PC-3 (cell line): ENCODE measurements at regions of chr12 and their contacts with region 1.

Region 1: GRCh38 chr12:27573972-27574371 is 50.0 kb downstream of the PPFIBP1 start:
- DNase-seq: peak; percentile 99
- ATAC-seq: peak; percentile 88
- H3K4me3 ChIP-seq: peak overlapping the region; percentile 29; the same call in 1 of the 2 replicates
- H3K27ac ChIP-seq: peak overlapping the region; percentile 96
- H3K4me1 ChIP-seq: peaks cover 66% of the 10 kb centered on the region
- H3K27me3 ChIP-seq: no peaks in the 10 kb centered on the region
- CTCF ChIP-seq: no peak

Region 2: DNA sequence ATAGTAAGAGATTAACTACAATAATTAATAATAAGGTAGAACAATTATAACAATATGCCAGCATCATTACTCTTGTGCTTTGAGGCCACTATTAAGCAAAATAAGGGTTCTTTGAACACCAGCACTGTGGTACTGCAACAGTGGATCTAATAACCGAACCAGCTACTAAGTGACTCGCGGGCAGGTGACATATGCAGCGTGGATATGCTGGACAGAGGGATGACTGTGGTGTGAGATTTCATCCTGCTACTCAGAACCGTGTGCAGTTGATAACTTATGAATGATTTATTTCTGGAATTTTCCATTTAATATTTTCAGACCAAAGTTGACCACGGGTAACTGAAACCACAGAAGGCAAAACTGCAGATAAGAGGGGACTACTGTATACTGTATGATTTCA is 206.9 kb before region 1 on chr12:
- CTCF ChIA-PET with region 1: no interaction called
- POLR2A ChIA-PET with region 1: no interaction called
- intact Hi-C with region 1: no loop called
- DNase-seq: peak; percentile 37
- ATAC-seq: peak; percentile 63
- H3K4me3 ChIP-seq: no peak overlapping the region
- H3K27ac ChIP-seq: peak overlapping the region; percentile 39
- H3K4me1 ChIP-seq: peaks cover 22% of the 10 kb centered on the region
- H3K27me3 ChIP-seq: no peaks in the 10 kb centered on the region
- CTCF ChIP-seq: no peak

Region 3: GRCh38 chr12:27549801-27550652 is 23.9 kb before region 1 on chr12:
- CTCF ChIA-PET with region 1: no interaction called
- POLR2A ChIA-PET with region 1: no interaction called
- intact Hi-C with region 1: loop called (anchors 1 kb)
- DNase-seq: peak; percentile 99
- ATAC-seq: peak; percentile 84
- H3K4me3 ChIP-seq: peak overlapping the region; percentile 51
- H3K27ac ChIP-seq: peak overlapping the region; percentile 94
- H3K4me1 ChIP-seq: peaks cover 38% of the 10 kb centered on the region
- H3K27me3 ChIP-seq: no peaks in the 10 kb centered on the region
- CTCF ChIP-seq: no peak

Region 4: DNA sequence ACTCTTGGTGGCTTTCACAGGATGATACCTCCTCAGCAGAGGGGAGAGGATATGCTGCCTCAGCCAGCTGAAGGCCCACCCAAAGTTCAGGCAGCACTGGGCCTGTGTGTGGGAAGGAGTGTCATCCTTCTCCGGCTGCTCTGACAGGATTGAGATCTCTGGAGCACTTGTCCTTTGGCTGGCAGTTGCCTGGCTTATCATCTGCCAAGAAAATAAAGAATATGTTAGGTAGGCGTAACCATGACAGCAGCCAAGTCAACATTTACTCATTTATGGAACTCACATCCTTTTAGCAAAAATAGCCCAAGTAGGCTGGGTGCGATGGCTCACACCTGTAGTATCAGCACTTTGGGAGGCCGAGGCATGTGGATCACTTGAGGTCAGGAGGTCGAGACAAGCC is 18.6 kb after region 1 on chr12:
- CTCF ChIA-PET with region 1: no interaction called
- POLR2A ChIA-PET with region 1: interaction called, 5 read pairs
- intact Hi-C with region 1: loop called (anchors 1 kb)
- DNase-seq: peak; percentile 93
- ATAC-seq: peak; percentile 89
- H3K4me3 ChIP-seq: no peak overlapping the region
- H3K27ac ChIP-seq: peak overlapping the region; percentile 48
- H3K4me1 ChIP-seq: peaks cover 47% of the 10 kb centered on the region
- H3K27me3 ChIP-seq: no peaks in the 10 kb centered on the region
- CTCF ChIP-seq: no peak

Region 5: DNA sequence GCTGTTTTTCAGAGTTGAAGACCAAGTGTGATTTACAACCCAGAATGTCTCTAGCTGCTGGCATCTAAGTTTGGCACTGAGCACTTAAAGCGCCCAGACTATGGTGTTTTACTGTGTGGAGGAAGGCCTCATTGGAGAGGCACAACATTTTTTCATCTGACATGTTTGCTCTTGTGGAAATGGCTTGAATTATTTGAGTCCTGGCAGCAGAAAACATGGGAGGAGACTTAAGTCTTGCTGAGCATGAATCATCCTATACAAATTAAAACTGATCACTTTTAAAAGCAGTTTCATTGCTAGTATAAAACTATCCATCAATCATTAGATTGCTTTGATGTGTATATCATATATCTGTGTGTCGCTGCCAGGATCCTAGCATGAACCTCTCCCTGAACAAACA is 36.4 kb after region 1 on chr12:
- CTCF ChIA-PET with region 1: no interaction called
- POLR2A ChIA-PET with region 1: interaction called, 15 read pairs
- intact Hi-C with region 1: no loop called
- DNase-seq: peak; percentile 88
- ATAC-seq: peak; percentile 81
- H3K4me3 ChIP-seq: no peak overlapping the region
- H3K27ac ChIP-seq: peak overlapping the region; percentile 49
- H3K4me1 ChIP-seq: peaks cover 36% of the 10 kb centered on the region
- H3K27me3 ChIP-seq: no peaks in the 10 kb centered on the region
- CTCF ChIP-seq: no peak

Region 6: DNA sequence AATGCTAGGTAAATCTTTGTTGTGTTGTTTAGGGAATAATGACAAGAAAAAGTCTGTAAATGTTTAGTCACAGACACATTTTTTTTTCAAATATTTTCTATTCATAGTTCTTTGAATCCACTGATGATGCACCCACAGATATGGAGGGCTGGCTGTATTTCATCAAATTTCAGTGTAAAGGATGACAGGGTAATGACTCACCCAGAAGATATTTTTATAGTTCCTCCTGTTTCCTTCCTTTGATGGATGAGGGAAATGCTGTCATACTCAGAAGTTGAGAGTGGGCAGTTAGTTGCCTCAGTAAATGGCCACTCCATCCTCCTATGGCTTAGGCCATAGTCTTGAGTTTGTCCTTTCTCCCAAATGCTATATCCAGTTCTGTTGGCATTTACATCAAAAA is 45.3 kb after region 1 on chr12:
- CTCF ChIA-PET with region 1: no interaction called
- POLR2A ChIA-PET with region 1: interaction called, 3 read pairs
- intact Hi-C with region 1: loop called (anchors 2 kb)
- DNase-seq: peak; percentile 99
- ATAC-seq: peak; percentile 73
- H3K4me3 ChIP-seq: no peak overlapping the region
- H3K27ac ChIP-seq: peak overlapping the region; percentile 73
- H3K4me1 ChIP-seq: peaks cover 88% of the 10 kb centered on the region
- H3K27me3 ChIP-seq: no peaks in the 10 kb centered on the region
- CTCF ChIP-seq: no peak

Region 7: DNA sequence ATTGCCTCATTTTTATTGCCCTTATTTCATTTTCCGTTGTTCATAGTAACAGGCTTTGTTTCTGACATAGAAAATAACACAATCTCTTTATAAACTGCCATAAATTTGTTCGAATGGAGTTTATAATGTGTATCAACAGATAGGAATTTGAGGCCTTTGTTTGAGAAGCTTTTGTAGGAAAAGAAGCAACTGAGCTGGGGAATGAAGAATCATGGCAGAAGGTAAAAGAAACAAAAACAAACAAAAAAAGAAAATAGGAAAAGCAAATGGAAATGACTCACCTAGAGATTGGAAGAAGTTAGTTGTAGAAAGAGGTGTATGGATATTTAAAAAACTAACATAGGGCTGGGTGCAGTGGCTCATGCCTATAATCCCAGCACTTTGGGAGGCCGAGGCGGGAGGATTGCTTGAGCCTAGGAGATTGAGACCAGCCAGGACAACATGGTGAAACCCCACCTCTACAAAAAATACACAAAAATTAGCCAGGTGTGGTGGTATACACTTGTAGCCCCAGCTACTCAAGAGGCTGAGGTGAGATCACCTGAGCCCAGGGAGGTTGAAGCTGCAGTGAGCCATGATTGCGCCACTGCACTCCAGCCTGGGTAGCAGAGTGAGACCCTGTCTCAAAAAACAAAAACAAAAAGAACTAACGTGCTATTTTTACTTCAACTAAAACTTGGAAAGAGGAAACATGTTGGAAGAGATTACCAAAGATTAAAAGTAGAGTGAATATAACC is 121.8 kb after region 1 on chr12:
- CTCF ChIA-PET with region 1: no interaction called
- POLR2A ChIA-PET with region 1: interaction called, 8 read pairs
- intact Hi-C with region 1: loop called (anchors 2 kb)
- DNase-seq: peak; percentile 45
- ATAC-seq: peak; percentile 80
- H3K4me3 ChIP-seq: no peak overlapping the region
- H3K27ac ChIP-seq: peak overlapping the region; percentile 17; the same call in 1 of the 2 replicates
- H3K4me1 ChIP-seq: no peaks in the 10 kb centered on the region
- H3K27me3 ChIP-seq: no peaks in the 10 kb centered on the region
- CTCF ChIP-seq: no peak